Ascending aorta (tissue), 2 donors: ENCODE measurements at regions of chr9 and their contacts with region 1.

Region 1: DNA sequence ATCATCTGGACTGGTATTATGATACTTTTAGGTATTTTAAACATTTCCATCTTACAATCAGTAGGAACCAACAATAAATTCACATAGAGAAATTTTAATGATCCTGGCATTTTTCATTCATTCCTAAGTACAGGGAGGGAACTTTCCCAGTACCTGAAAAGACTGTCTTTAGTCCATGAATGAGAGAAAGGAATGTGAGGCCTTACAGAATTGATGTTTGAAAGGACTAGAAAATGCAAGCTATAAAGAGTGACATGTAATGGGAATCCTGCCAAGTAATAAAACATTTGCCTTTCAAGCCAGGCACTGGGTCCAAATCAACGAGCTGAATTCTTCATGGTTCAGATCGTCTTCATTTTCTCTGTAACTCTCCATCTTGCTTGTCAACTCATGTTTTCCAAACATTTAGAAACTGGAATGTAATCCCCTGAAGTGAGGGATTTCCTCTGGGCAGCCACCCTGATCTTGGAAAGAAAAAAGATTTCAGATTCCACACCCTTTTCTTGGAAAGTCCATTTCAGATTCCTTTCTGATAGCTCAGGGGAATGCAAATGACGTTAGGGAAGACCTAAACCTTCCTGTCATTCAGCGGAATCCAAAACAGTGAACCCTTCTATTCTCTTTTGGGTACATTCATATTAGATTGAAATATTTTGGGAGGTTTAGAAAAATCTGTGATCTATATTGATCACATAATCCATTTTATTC is 315.8 kb downstream of the SH3GL2 start:
- DNase-seq: no peak
- H3K4me3 ChIP-seq: no peak overlapping the region
- H3K27ac ChIP-seq: peak overlapping the region; percentile 3 to 52
- H3K4me1 ChIP-seq: peaks cover 0 to 12% of the 10 kb centered on the region in 2 donors
- H3K27me3 ChIP-seq: no peaks in the 10 kb centered on the region
- CTCF ChIP-seq: no peak

Region 2: DNA sequence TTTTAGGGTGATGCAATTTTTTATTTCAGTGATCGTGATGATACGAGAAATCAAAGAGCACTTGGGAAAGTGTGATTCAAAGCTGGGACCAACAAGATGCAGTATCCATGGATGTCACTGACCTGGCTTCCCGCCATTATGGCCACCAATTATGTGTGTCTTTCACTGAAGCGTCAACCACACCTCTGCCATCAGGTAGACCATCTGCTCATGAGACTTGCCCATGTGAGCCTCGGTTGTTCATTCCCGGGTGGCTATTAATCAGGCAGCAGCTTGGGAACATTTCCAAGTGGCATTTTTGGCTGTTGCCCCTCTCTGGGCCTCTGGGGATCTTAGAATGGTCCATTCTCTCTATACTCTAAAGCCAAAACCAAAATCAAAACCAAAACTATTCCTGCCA is 143.4 kb after region 1 on chr9:
- intact Hi-C with region 1: loop called (anchors 10 kb)
- DNase-seq: no peak
- H3K4me3 ChIP-seq: peak overlapping the region in 1 of 2 donors; percentile 25
- H3K27ac ChIP-seq: peak overlapping the region; percentile 55 to 62
- H3K4me1 ChIP-seq: peaks cover 0 to 37% of the 10 kb centered on the region in 2 donors
- H3K27me3 ChIP-seq: no peaks in the 10 kb centered on the region
- CTCF ChIP-seq: no peak